Caco-2 (cell line): ENCODE measurements at regions of chr22 and their contacts with region 1.

Region 1: GRCh38 chr22:49548356-49549211 is 279.1 kb downstream of the BRD1 start:
- DNase-seq: peak; percentile 67 to 80
- H3K4me3 ChIP-seq: peak overlapping the region; percentile 14; the same call in 1 of the 2 replicates
- H3K4me3 Mint-ChIP-seq: peak overlapping the region; percentile 52
- H3K27ac Mint-ChIP-seq: peak overlapping the region; percentile 89
- H3K4me1 ChIP-seq: peaks cover 15% of the 10 kb centered on the region
- H3K4me1 Mint-ChIP-seq: peaks cover 20% of the 10 kb centered on the region
- H3K27me3 ChIP-seq: no peaks in the 10 kb centered on the region
- H3K27me3 Mint-ChIP-seq: no peaks in the 10 kb centered on the region
- CTCF ChIP-seq: peak in 1 of 2 experiments; percentile 16

Region 2: GRCh38 chr22:49481659-49482399 is 66.8 kb before region 1 on chr22:
- CTCF ChIA-PET with region 1: no interaction called
- POLR2A ChIA-PET with region 1: no interaction called
- intact Hi-C with region 1: loop called (anchors 10 kb)
- DNase-seq: no peak
- H3K4me3 ChIP-seq: no peak overlapping the region
- H3K4me3 Mint-ChIP-seq: peak overlapping the region; percentile 61
- H3K27ac Mint-ChIP-seq: no peak overlapping the region
- H3K4me1 ChIP-seq: no peaks in the 10 kb centered on the region
- H3K4me1 Mint-ChIP-seq: no peaks in the 10 kb centered on the region
- H3K27me3 ChIP-seq: no peaks in the 10 kb centered on the region
- H3K27me3 Mint-ChIP-seq: peaks cover 4% of the 10 kb centered on the region
- CTCF ChIP-seq: no peak

Region 3: DNA sequence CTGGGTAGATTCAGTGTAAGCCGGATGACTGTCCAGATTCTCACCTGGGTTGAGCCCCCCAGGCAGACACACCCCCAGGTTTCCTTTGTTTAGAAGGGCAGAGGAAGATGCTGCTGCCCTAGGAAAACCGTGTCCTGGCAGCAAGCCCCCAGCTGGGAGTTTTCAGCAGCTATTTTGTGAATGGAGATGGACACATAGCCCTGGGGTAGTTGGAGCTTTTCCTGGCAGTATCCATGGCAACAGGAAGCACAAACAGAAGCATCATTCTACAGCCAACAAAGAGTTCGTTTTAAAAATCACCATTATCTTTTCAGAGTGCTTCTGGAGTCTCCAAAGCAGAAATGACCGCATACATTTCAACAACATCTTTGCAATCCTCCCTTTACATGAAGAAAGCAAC is 33.6 kb after region 1 on chr22:
- CTCF ChIA-PET with region 1: no interaction called
- POLR2A ChIA-PET with region 1: no interaction called
- intact Hi-C with region 1: no loop called
- DNase-seq: no peak
- H3K4me3 ChIP-seq: no peak overlapping the region
- H3K4me3 Mint-ChIP-seq: no peak overlapping the region
- H3K27ac Mint-ChIP-seq: no peak overlapping the region
- H3K4me1 ChIP-seq: no peaks in the 10 kb centered on the region
- H3K4me1 Mint-ChIP-seq: no peaks in the 10 kb centered on the region
- H3K27me3 ChIP-seq: no peaks in the 10 kb centered on the region
- H3K27me3 Mint-ChIP-seq: peaks cover 6% of the 10 kb centered on the region
- CTCF ChIP-seq: no peak